ENCODE measurements at regions of chr10 and their contacts with region 1.

Region 1: DNA sequence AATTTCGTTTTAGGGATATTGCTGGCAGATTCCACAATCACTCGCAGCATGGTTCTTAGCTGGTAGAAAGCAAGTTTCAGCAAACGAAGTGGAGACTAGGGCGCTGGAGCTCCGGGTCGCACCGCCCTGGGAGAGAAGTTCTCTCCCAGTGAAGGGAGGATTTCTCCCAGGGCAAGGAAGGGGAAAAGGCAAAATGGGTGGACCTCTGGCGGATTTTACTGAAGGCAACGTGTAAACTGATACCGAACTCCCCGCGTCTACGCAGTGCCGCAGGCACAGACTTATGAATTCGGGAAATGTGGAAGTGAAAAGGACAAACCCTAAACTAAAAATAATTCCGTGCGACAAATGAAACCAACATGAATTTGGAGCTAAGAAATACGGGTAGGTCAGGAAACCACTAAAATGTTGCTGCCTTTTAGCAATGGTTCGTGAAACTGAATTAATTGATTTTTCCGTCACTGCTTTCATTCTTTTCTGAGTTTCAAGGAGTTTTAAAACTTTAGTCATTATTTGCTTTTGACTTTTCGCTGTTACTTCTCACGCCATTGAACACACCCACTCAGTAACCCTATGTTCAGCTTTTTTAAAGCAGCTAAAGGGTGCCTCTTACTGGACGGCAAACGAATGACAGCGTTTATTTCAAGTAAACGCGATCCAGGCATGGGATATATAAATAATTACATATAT is at the start of gene MYOF:
- DNase-seq: peak; percentile 71
- ATAC-seq: peak; percentile 90
- H3K4me3 Mint-ChIP-seq: peak within 1 kb of the TSS; percentile 75
- H3K27ac Mint-ChIP-seq: peak within 1 kb of the TSS; percentile 87
- H3K4me1 Mint-ChIP-seq: peaks cover 18% of the 10 kb centered on the region
- H3K27me3 Mint-ChIP-seq: peaks cover 18% of the 10 kb centered on the region
- CTCF ChIP-seq: peak; percentile 70
- total RNA-seq, gene MYOF: 4.9 to 5.4 TPM

Region 2: DNA sequence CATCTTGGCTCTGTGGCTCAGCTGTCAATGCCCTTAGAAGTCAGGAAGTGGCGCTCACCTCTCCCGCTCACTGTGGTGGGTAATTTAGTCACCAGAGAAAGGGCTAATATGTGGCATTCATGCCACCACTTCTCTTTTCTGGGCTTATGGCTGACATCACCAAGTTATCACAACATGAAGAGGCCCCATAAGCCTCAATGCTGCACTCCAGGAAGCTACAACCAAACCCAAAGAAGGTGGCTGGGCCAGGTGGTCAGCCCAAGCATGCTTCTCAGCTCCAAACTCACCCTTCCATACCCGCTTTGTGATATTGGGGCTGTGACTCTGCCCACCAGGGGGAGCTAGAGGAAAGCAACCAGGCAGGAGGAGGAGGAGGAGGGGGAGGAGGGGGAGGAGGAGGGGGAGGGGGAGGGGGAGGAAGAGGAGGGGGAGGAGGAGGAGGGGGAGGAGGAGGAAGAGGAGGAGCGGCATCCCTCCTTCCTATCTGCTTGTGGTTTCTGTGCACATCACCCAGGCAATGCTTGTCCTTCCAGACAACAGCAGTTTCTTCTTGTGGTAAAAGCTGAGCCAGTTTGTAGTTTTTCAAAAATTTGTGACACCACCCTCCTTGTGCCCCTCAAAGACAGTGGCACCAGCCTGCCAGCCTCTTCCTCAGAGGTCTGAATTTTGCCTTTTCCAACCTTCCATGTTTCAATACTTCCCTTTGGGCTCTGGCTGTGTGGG is 366.5 kb before region 1 on chr10:
- CTCF ChIA-PET with region 1: interaction called, 10 read pairs
- POLR2A ChIA-PET with region 1: no interaction called
- intact Hi-C with region 1: no loop called
- DNase-seq: peak; percentile 80
- ATAC-seq: peak; percentile 80
- H3K4me3 Mint-ChIP-seq: no peak overlapping the region
- H3K27ac Mint-ChIP-seq: no peak overlapping the region
- H3K4me1 Mint-ChIP-seq: peaks cover 9% of the 10 kb centered on the region
- H3K27me3 Mint-ChIP-seq: peaks cover 8% of the 10 kb centered on the region
- CTCF ChIP-seq: peak; percentile 55

Region 3: DNA sequence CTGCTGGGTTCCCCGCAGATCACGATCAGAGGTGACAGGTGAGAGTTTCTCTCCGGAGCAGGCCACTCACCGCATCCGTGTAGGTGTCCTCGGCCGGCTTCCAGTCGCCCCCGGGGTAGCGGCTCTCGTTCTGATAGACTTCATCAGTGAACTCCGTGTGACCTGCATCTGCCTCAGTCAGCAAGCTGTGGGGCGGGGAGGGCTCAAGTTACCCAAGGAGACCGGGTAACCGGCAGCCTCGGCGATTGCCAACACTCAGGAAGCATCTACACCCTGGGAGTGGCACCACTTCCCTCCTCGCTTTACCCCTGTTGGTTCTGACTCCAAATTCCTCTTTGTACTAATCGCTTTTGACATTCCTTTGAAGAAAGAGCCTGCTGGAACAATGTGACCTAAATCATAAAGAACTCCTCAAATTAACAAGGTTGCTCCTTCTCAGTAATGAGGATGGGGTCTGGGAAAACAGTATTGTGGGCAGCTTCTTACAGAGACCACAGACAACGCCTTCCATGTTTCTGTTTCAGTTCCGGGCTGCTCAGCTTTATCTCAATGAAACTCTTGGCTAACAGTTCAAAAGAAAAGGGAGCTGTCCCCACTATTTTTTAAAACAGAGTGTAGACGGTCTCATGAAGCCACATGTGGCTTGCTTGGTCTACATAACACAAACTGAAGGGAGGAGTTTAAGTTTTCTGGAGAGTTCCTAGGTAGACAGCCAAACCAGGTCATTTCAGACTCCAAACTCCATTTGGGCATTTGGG is 118.2 kb before region 1 on chr10:
- CTCF ChIA-PET with region 1: interaction called, 27 read pairs
- POLR2A ChIA-PET with region 1: no interaction called
- intact Hi-C with region 1: no loop called
- DNase-seq: no peak
- ATAC-seq: no peak
- H3K4me3 Mint-ChIP-seq: no peak overlapping the region
- H3K27ac Mint-ChIP-seq: no peak overlapping the region
- H3K4me1 Mint-ChIP-seq: no peaks in the 10 kb centered on the region
- H3K27me3 Mint-ChIP-seq: peaks cover 4% of the 10 kb centered on the region
- CTCF ChIP-seq: no peak

Region 4: GRCh38 chr10:93413252-93413689 is 69.0 kb before region 1 on chr10:
- CTCF ChIA-PET with region 1: interaction called, 22 read pairs
- POLR2A ChIA-PET with region 1: no interaction called
- intact Hi-C with region 1: no loop called
- DNase-seq: peak; percentile 39
- ATAC-seq: peak; percentile 71
- H3K4me3 Mint-ChIP-seq: no peak overlapping the region
- H3K27ac Mint-ChIP-seq: peak overlapping the region; percentile 71
- H3K4me1 Mint-ChIP-seq: peaks cover 50% of the 10 kb centered on the region
- H3K27me3 Mint-ChIP-seq: no peaks in the 10 kb centered on the region
- CTCF ChIP-seq: no peak

Region 5: GRCh38 chr10:93471110-93471651 is 11.1 kb before region 1 on chr10:
- CTCF ChIA-PET with region 1: interaction called, 20 read pairs
- POLR2A ChIA-PET with region 1: interaction called, 4 read pairs
- intact Hi-C with region 1: no loop called
- DNase-seq: no peak
- ATAC-seq: peak; percentile 51
- H3K4me3 Mint-ChIP-seq: no peak overlapping the region
- H3K27ac Mint-ChIP-seq: no peak overlapping the region
- H3K4me1 Mint-ChIP-seq: peaks cover 3% of the 10 kb centered on the region
- H3K27me3 Mint-ChIP-seq: no peaks in the 10 kb centered on the region
- CTCF ChIP-seq: no peak

Region 6: DNA sequence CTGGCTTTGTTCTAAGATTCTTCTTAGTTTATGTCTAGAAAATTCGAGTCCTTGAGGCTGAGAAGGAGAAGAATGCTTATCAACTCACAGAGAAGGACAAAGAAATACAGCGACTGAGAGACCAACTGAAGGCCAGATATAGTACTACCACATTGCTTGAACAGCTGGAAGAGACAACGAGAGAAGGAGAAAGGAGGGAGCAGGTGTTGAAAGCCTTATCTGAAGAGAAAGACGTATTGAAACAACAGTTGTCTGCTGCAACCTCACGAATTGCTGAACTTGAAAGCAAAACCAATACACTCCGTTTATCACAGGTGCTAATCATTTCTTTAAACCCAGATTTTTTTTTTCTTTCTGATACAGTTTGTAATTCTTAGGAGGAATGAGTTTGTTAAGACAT is 20.8 kb after region 1 on chr10:
- CTCF ChIA-PET with region 1: interaction called, 64 read pairs
- POLR2A ChIA-PET with region 1: no interaction called
- intact Hi-C with region 1: no loop called
- DNase-seq: no peak
- ATAC-seq: no peak
- H3K4me3 Mint-ChIP-seq: no peak overlapping the region
- H3K27ac Mint-ChIP-seq: no peak overlapping the region
- H3K4me1 Mint-ChIP-seq: peaks cover 15% of the 10 kb centered on the region
- H3K27me3 Mint-ChIP-seq: no peaks in the 10 kb centered on the region
- CTCF ChIP-seq: no peak

Region 7: GRCh38 chr10:94052866-94053791 is 570.8 kb after region 1 on chr10:
- CTCF ChIA-PET with region 1: no interaction called
- POLR2A ChIA-PET with region 1: no interaction called
- intact Hi-C with region 1: no loop called
- DNase-seq: no peak
- ATAC-seq: no peak
- H3K4me3 Mint-ChIP-seq: no peak overlapping the region
- H3K27ac Mint-ChIP-seq: no peak overlapping the region
- H3K4me1 Mint-ChIP-seq: no peaks in the 10 kb centered on the region
- H3K27me3 Mint-ChIP-seq: peaks cover 3% of the 10 kb centered on the region
- CTCF ChIP-seq: no peak

Measured in activated CD8-positive, alpha-beta T cell treated with anti-CD3 and anti-CD28 coated beads for 36 hours (primary cell).